Motor neuron (in vitro differentiated cells): ENCODE measurements at regions of chr15 and their contacts with region 1.

Region 1: DNA sequence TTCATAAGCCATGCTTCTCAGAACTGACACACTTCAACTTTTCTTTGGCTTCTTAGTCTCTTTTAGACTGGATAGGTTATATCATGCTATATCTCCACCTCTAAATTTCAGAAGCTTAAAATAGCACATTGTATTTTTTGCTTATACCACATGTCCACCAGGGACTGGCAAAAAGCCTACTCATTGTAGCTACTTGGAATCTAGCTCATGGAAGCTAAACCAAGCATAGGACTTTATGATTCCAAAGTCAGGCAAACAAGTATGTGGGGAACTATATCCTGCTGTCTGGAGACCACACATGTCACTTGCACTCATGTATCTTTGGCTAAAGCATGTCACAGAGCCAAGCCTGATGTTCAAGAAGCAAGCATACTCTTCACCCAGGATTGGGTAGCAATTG is 245.0 kb upstream of the RASGRP1 start:
- ATAC-seq: no peak
- H3K4me3 ChIP-seq: no peak overlapping the region
- H3K27ac ChIP-seq: no peak overlapping the region
- H3K4me1 ChIP-seq: no peaks in the 10 kb centered on the region

Region 2: GRCh38 chr15:38714309-38715072 is 95.1 kb before region 1 on chr15:
- in situ Hi-C with region 1: loop called in 1 of 9 experiments (anchors 10 kb)
- ATAC-seq: peak in 2 of 8 experiments; percentile 46 to 54
- H3K4me3 ChIP-seq: no peak overlapping the region
- H3K27ac ChIP-seq: no peak overlapping the region
- H3K4me1 ChIP-seq: no peaks in the 10 kb centered on the region

Region 3: DNA sequence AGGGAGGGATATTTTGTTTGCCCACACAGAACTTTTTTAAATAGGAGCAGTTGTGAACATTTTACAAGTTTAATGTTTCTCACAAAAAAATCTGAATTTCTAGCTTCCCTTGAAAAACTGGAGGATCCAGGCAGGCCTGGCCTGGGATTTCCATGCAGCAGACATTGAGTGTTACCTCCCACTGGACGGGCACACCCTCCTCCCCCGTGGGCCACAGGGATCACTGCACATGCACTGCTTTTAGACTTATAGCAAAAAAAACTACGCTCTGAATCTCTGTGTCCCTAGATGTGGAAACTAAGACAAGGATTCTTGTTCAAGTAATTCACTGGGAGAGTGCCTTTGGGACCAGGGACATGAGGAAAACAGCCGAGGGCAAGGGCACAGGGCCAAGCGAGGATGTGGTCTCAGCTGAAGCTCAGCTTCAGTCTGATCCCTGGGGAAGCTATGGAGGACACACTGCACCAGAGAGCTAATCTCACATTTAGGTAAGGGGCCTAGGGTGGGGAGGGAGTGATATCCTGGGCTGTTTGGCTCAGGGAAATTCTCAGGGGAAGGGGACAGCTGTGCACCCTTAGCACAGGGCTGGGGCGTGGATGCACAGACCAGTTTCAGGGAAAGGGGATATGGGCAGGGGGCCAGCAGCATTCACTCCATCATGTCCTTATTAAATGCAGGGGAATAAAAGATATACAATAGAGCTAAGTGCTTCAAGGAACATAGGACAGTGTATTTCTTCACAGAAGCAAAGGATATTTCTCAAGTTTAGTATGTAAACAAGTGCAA is 927.0 kb after region 1 on chr15:
- in situ Hi-C with region 1: no loop called
- ATAC-seq: peak in 2 of 8 experiments; percentile 12 to 52
- H3K4me3 ChIP-seq: no peak overlapping the region
- H3K27ac ChIP-seq: no peak overlapping the region
- H3K4me1 ChIP-seq: no peaks in the 10 kb centered on the region